Endothelial cell of umbilical vein (primary cell): ENCODE measurements at regions of chr12 and their contacts with region 1.

Region 1: GRCh38 chr12:48890657-48891418 is 25.2 kb upstream of the RND1 start:
- DNase-seq: peak; percentile 76
- H3K4me3 ChIP-seq: no peak overlapping the region
- H3K27ac ChIP-seq: no peak overlapping the region
- H3K4me1 ChIP-seq: no peaks in the 10 kb centered on the region
- H3K27me3 ChIP-seq: peaks cover 5 to 7% of the 10 kb centered on the region in 2 experiments
- CTCF ChIP-seq: peak; percentile 95
- POLR2A ChIP-seq: no peak

Region 2: GRCh38 chr12:48865434-48866290 is 25.2 kb before region 1 on chr12 and contains the start of gene RND1:
- CTCF ChIA-PET with region 1: interaction called, 703 read pairs
- POLR2A ChIA-PET with region 1: interaction called, 9 read pairs
- dilution Hi-C with region 1: no loop called
- intact Hi-C with region 1: no loop called
- DNase-seq: peak; percentile 95
- H3K4me3 ChIP-seq: peak within 1 kb of the TSS in 2 of 3 experiments; percentile 43 to 52
- H3K27ac ChIP-seq: no peak within 1 kb of the TSS
- H3K4me1 ChIP-seq: peaks cover 12% of the 10 kb centered on the region
- H3K27me3 ChIP-seq: peaks cover 17% of the 10 kb centered on the region in 2 experiments
- CTCF ChIP-seq: no peak
- POLR2A ChIP-seq: peak; percentile 97
- total RNA-seq, gene RND1: 4.0 and 4.4 TPM in 2 replicates

Region 3: DNA sequence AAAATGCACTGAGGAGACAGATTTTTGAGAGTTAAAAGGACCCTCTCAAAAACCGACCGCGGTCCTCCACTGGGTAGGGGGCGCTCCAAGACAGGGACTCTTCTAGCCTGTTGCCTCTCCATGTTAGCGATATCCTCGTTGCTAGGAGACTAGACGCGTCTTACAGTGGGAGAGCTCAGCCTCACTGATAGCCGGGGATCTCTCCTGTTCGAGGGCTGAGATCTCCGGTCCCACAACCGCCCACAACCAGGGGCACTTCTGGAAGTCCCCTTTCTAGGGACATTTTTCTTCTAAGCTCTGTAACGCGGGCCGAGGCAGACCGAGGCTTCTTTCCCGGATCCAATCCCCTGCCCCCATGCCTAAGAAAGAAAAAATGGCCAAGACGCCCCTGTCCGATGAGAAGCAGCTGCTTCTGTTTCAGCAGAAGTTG is 13.2 kb after region 1 on chr12:
- CTCF ChIA-PET with region 1: interaction called, 56 read pairs
- POLR2A ChIA-PET with region 1: no interaction called
- dilution Hi-C with region 1: no loop called
- intact Hi-C with region 1: no loop called
- DNase-seq: peak; percentile 76
- H3K4me3 ChIP-seq: peak overlapping the region in 2 of 3 experiments; percentile 32 to 46
- H3K27ac ChIP-seq: no peak overlapping the region
- H3K4me1 ChIP-seq: peaks cover 3% of the 10 kb centered on the region
- H3K27me3 ChIP-seq: no peaks in the 10 kb centered on the region
- CTCF ChIP-seq: peak; percentile 62 to 77
- POLR2A ChIP-seq: no peak

Region 4: GRCh38 chr12:48936379-48936979 is 45.6 kb after region 1 on chr12:
- CTCF ChIA-PET with region 1: interaction called, 15 read pairs
- POLR2A ChIA-PET with region 1: no interaction called
- dilution Hi-C with region 1: no loop called
- intact Hi-C with region 1: loop called (anchors 2 kb)
- DNase-seq: peak; percentile 64
- H3K4me3 ChIP-seq: no peak overlapping the region
- H3K27ac ChIP-seq: no peak overlapping the region
- H3K4me1 ChIP-seq: no peaks in the 10 kb centered on the region
- H3K27me3 ChIP-seq: no peaks in the 10 kb centered on the region
- CTCF ChIP-seq: peak; percentile 86 to 92
- POLR2A ChIP-seq: no peak